Activated CD4-positive, alpha-beta T cell treated with anti-CD3 and anti-CD28 coated beads, Interleukin-2, amount 10 ng/mL, durations not matched to agents 7 days and 5 days (primary cell): ENCODE measurements at regions of chr3 and their contacts with region 1.

Region 1: GRCh38 chr3:128617557-128618397 is 32.8 kb downstream of the RPN1 start:
- DNase-seq: peak; percentile 99
- H3K4me3 Mint-ChIP-seq: peak overlapping the region; percentile 83
- H3K27ac Mint-ChIP-seq: peak overlapping the region; percentile 88
- H3K4me1 Mint-ChIP-seq: peaks cover 39% of the 10 kb centered on the region
- H3K27me3 Mint-ChIP-seq: no peaks in the 10 kb centered on the region

Region 2: DNA sequence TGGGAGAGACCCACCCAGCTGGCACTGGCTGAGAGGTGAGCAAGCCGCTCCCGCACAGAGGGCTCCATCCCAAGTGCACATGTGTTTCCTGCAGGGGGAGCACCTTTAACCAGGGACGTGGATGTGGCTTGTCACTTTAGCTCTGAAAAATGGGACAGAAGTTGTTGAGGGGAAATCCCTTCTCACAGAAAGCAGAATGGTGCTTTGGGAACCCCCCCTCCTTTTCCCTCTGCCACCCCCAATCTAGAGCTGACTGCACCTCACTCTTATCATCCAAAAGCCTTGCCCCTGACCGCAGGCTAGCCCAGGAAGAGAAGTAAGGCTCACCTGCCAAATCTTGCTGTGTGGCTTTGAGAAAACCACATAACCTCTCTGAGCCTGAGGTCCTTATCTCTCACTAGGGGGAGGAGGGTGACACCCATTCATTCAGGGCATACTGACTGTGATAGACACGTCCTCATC is 45.1 kb before region 1 on chr3:
- CTCF ChIA-PET with region 1: no interaction called
- POLR2A ChIA-PET with region 1: no interaction called
- DNase-seq: peak; percentile 57
- H3K4me3 Mint-ChIP-seq: no peak overlapping the region
- H3K27ac Mint-ChIP-seq: no peak overlapping the region
- H3K4me1 Mint-ChIP-seq: peaks cover 16% of the 10 kb centered on the region
- H3K27me3 Mint-ChIP-seq: peaks cover 28% of the 10 kb centered on the region

Region 3: GRCh38 chr3:128590948-128591347 is 26.8 kb before region 1 on chr3:
- CTCF ChIA-PET with region 1: interaction called, 10 read pairs
- POLR2A ChIA-PET with region 1: no interaction called
- DNase-seq: no peak
- H3K4me3 Mint-ChIP-seq: no peak overlapping the region
- H3K27ac Mint-ChIP-seq: no peak overlapping the region
- H3K4me1 Mint-ChIP-seq: peaks cover 26% of the 10 kb centered on the region
- H3K27me3 Mint-ChIP-seq: no peaks in the 10 kb centered on the region

Region 4: DNA sequence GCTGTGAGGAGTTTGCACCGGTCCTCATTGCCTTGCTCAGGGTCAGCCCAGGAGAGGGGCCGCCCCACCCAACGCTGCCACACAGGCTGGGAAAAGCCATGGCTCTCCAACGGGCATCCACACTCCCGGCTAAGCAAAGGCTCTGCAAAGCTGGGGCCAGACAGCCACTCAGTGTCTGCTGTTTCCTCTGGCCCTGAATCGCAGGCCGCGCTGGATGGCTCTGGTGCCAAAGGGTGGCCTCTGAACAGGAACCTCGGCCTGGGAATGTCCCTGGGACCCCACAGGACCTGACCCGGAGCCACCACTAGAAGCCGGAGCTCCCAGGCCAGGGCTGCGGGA is 10.1 kb before region 1 on chr3:
- CTCF ChIA-PET with region 1: interaction called, 41 read pairs
- POLR2A ChIA-PET with region 1: no interaction called
- DNase-seq: no peak
- H3K4me3 Mint-ChIP-seq: no peak overlapping the region
- H3K27ac Mint-ChIP-seq: no peak overlapping the region
- H3K4me1 Mint-ChIP-seq: peaks cover 1% of the 10 kb centered on the region
- H3K27me3 Mint-ChIP-seq: peaks cover 6% of the 10 kb centered on the region

Region 5: GRCh38 chr3:128632301-128632700 is 14.5 kb after region 1 on chr3:
- CTCF ChIA-PET with region 1: interaction called, 22 read pairs
- POLR2A ChIA-PET with region 1: no interaction called
- DNase-seq: no peak
- H3K4me3 Mint-ChIP-seq: no peak overlapping the region
- H3K27ac Mint-ChIP-seq: no peak overlapping the region
- H3K4me1 Mint-ChIP-seq: peaks cover 2% of the 10 kb centered on the region
- H3K27me3 Mint-ChIP-seq: no peaks in the 10 kb centered on the region

Region 6: DNA sequence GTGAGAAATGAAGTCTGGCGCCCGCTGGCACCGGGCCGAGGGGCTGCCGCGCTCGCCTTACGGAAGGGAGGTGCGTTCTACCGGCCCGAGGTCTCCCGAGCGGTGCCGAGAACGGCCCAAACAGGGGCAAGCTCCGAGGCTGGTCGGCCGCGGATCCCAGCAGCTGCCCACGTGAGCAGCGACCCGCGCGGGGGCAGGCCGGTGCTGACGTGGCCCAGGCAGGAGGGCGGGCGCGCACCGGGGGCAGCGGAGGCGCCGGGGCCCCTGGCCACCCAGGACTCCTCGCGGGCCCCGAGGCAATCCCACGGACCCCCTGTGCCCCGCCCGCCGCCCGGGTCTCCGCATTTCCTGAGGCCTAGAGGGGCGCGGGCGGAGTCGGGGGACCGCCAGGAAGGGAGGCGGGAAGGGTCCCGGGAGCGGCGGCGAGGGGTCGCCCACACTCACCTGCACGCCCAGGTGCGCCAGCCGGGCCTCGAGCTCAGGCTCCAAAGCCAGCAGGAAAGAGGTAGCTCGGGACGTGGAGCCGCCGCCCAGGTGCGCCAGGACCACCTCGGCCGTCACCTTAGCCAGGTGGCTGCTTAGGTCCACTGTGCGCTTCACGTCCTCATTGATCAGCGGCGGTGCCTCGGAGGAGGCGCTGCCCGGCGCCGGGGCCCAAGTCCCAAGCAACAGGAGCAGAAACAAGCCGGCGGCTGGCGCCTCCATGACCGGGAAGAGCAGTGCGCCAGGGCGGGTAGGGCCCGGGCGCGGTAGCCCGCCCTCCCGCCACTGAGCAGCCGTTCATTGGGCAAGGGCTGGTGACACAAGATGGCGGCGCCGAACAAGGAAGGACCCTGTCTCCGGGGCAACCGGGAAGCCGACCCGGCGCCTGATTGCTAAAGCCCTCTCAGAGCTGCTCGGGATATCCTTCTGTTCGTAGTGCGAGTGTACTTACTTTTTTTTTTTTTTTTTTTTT is 32.6 kb after region 1 on chr3 and contains the start of gene RPN1:
- CTCF ChIA-PET with region 1: interaction called, 12 read pairs
- POLR2A ChIA-PET with region 1: interaction called, 3 read pairs
- DNase-seq: peak; percentile 97
- H3K4me3 Mint-ChIP-seq: peak within 1 kb of the TSS; percentile 84
- H3K27ac Mint-ChIP-seq: peak within 1 kb of the TSS; percentile 92
- H3K4me1 Mint-ChIP-seq: peaks cover 45% of the 10 kb centered on the region
- H3K27me3 Mint-ChIP-seq: no peaks in the 10 kb centered on the region
- total RNA-seq, gene RPN1: 164 to 177 TPM

Region 7: GRCh38 chr3:128879125-128879969 is 261.6 kb after region 1 on chr3 and contains the start of gene ACAD9:
- CTCF ChIA-PET with region 1: interaction called, 13 read pairs
- POLR2A ChIA-PET with region 1: no interaction called
- DNase-seq: peak; percentile 97
- H3K4me3 Mint-ChIP-seq: peak within 1 kb of the TSS; percentile 91
- H3K27ac Mint-ChIP-seq: peak within 1 kb of the TSS; percentile 98
- H3K4me1 Mint-ChIP-seq: peaks cover 61% of the 10 kb centered on the region
- H3K27me3 Mint-ChIP-seq: peaks cover 3% of the 10 kb centered on the region
- total RNA-seq, gene ACAD9: 74.7 to 77.4 TPM